Panc1 (cell line): ENCODE measurements at regions of chr2 and their contacts with region 1.

Region 1: DNA sequence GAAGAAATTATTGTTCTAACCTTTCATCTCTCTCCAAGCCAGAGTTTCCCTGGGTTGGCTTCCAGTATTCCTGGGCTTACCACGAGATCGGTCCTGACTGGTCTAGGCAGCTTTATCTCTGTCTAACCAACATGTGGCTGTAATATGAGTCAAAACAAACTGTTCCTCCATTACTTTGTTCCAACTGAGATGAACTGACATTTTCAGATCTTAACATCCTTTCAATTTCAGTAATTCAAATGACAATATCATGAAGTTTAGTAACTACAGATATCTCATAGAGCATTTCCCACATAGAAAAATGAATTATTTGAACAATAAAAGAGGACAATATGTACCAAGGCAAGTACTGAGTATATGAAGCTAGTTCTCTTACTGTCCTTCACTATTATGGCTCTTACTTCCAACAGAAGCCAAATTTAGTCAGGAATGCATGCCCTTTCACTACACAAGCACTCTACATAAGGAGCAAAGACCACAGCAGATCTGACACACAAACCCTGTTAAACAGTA is 15.5 kb downstream of the SLC25A12 start:
- DNase-seq: no peak
- ATAC-seq: peak; percentile 58; the same call in 1 of the 2 replicates
- H3K4me3 ChIP-seq: no peak overlapping the region
- H3K27ac ChIP-seq: no peak overlapping the region
- H3K4me1 ChIP-seq: peaks cover 5% of the 10 kb centered on the region; the same call in 1 of the 2 replicates
- H3K27me3 ChIP-seq: no peaks in the 10 kb centered on the region
- CTCF ChIP-seq: no peak

Region 2: GRCh38 chr2:171893824-171894611 is 15.5 kb after region 1 on chr2 and contains the start of gene SLC25A12:
- CTCF ChIA-PET with region 1: no interaction called
- POLR2A ChIA-PET with region 1: interaction called, 13 read pairs
- in situ Hi-C with region 1: no loop called
- intact Hi-C with region 1: no loop called
- DNase-seq: peak; percentile 32
- ATAC-seq: peak; percentile 98
- H3K4me3 ChIP-seq: peak within 1 kb of the TSS; percentile 95 to 97
- H3K27ac ChIP-seq: peak within 1 kb of the TSS; percentile 92
- H3K4me1 ChIP-seq: peaks cover 7% of the 10 kb centered on the region
- H3K27me3 ChIP-seq: no peaks in the 10 kb centered on the region
- CTCF ChIP-seq: no peak
- total RNA-seq, gene SLC25A12: 17.8 TPM

Region 3: GRCh38 chr2:172056293-172056692 is 177.8 kb after region 1 on chr2:
- CTCF ChIA-PET with region 1: no interaction called
- POLR2A ChIA-PET with region 1: interaction called, 10 read pairs
- in situ Hi-C with region 1: no loop called
- intact Hi-C with region 1: no loop called
- DNase-seq: no peak
- ATAC-seq: no peak
- H3K4me3 ChIP-seq: no peak overlapping the region
- H3K27ac ChIP-seq: no peak overlapping the region
- H3K4me1 ChIP-seq: peaks cover 8% of the 10 kb centered on the region; the same call in 1 of the 2 replicates
- H3K27me3 ChIP-seq: no peaks in the 10 kb centered on the region
- CTCF ChIP-seq: no peak